K562 (cell line): ENCODE measurements at regions of chr6 and their contacts with region 1.

Region 1: DNA sequence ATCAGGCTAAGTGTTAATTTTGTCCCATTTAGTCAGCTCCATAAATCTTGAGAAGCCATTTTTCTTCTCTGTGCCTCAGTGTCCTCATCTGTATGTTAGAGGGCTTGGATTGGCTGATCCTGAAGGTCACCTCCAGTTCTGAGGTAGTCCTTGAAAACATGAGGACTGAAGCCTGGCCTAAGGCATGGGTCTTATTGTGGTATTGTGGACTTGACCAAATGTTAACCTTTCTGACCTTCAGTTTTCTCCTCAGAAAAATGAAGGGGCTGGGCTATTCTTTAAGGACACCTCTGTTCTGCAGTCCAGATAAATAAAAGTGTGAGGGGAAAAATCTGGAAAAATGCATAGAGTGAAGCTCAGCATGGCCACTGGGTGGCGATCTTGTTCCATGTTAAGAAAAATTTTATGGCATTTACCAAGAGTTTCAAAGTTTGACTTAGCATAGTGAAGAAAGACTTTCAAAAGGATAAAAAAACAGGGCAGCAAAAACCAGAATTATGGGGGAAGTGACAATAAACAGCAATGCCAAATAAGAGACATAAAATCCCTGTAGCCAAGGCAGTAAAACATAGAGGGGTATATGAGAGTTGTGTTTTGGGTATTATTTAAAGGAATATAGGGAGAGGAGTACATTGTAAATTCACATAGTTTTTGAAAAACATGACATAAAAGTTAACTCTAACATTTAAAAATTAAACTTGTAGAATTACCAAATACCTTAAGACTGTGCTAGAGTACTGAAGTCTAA is 13.2 kb upstream of the TFB1M start:
- DNase-seq: peak; percentile 30 to 75 (median 46)
- ATAC-seq: peak; percentile 85
- H3K4me3 ChIP-seq: no peak overlapping the region
- H3K27ac ChIP-seq: no peak overlapping the region
- H3K4me1 ChIP-seq: no peaks in the 10 kb centered on the region; a peak in 1 of 5 replicates
- H3K27me3 ChIP-seq: peaks cover 2 to 5% of the 10 kb centered on the region in 2 experiments; a peak in 3 of 5 replicates
- CTCF ChIP-seq: peak; percentile 54 to 93 (median 79)
- EP300 ChIP-seq: no peak
- POLR2A ChIP-seq: no peak
- RAD21 ChIP-seq: peak; percentile 90 to 91

Region 2: DNA sequence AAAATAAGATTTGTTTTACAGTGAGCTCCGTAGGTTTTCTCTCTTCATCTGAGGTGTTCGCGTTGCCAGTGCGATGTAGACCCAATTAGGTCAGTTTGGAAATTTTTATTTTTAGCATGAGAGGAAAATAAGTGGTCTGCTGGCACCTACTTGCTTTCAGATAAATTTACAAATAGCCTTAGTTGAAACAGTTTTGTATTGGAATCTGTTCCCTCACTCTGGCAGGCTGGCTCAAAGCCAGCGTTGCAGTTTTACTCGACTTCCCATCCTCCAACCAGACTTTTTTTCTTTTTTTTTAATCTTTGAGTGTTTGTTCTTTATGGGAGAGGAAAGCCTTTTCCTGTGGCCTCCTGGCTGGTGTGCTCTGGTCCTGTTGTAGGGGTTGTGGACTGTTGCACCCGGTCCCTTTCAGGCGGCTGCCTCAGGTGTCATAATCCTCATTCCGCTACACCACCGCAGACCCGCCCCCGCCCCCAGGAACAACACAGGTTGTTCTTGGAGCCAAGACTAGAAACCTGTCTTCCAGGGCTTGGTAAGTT is 285.7 kb before region 1 on chr6:
- CTCF ChIA-PET with region 1: no interaction called
- POLR2A ChIA-PET with region 1: no interaction called
- in situ Hi-C with region 1: no loop called
- intact Hi-C with region 1: no loop called
- DNase-seq: no peak
- ATAC-seq: no peak
- H3K4me3 ChIP-seq: no peak overlapping the region
- H3K27ac ChIP-seq: no peak overlapping the region
- H3K4me1 ChIP-seq: no peaks in the 10 kb centered on the region
- H3K27me3 ChIP-seq: peaks cover 42 to 66% of the 10 kb centered on the region in 2 experiments
- CTCF ChIP-seq: no peak
- EP300 ChIP-seq: no peak
- POLR2A ChIP-seq: no peak
- RAD21 ChIP-seq: no peak

Region 3: GRCh38 chr6:155174576-155175211 is 152.8 kb before region 1 on chr6:
- CTCF ChIA-PET with region 1: interaction called, 4 read pairs
- POLR2A ChIA-PET with region 1: no interaction called
- in situ Hi-C with region 1: no loop called
- intact Hi-C with region 1: loop called (anchors 2 kb)
- DNase-seq: peak; percentile 60 to 83 (median 72)
- ATAC-seq: peak; percentile 98
- H3K4me3 ChIP-seq: no peak overlapping the region
- H3K27ac ChIP-seq: no peak overlapping the region
- H3K4me1 ChIP-seq: peaks cover 0 to 2% of the 10 kb centered on the region in 2 experiments; a peak in 1 of 5 replicates
- H3K27me3 ChIP-seq: peaks cover 5 to 15% of the 10 kb centered on the region in 2 experiments; a peak in 3 of 5 replicates
- CTCF ChIP-seq: peak; percentile 71 to 79 (median 79)
- EP300 ChIP-seq: no peak
- POLR2A ChIP-seq: no peak
- RAD21 ChIP-seq: peak; percentile 79 to 94

Region 4: DNA sequence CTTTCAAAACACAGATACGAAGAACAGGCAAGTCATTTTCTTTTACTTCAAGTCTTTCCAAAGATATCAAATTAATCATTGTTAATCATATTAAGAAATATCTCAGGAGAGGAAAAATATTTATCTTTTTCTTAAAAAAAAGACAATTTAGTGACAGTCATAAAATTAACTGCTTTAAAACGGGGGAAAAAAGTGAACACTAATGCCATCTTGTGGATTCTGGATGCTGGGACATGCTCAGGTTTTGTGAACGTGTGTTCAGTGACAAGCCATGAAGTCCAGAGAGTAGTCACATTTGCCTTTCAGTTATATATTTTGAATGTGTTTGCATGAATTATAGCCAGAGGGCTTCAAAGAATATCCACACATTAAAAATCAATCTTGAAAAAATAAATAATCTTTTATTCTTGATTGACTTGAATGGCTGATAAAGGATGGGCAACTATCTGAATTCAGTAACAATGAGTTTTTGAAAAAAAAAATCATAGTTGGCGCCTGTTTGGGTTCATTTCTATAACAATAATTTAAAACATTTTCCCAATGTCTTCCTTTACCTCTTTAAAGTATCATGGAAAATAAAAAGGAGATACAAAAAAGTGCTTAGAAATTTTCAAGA is 202.8 kb after region 1 on chr6:
- CTCF ChIA-PET with region 1: no interaction called
- POLR2A ChIA-PET with region 1: no interaction called
- in situ Hi-C with region 1: no loop called
- intact Hi-C with region 1: loop called (anchors 2 kb)
- DNase-seq: peak in 2 of 4 experiments; percentile 8 to 19
- ATAC-seq: peak; percentile 57; the same call in 2 of the 3 replicates
- H3K4me3 ChIP-seq: no peak overlapping the region
- H3K27ac ChIP-seq: no peak overlapping the region
- H3K4me1 ChIP-seq: no peaks in the 10 kb centered on the region
- H3K27me3 ChIP-seq: no peaks in the 10 kb centered on the region
- CTCF ChIP-seq: peak in 2 of 3 experiments; percentile 27 to 39; a peak in 2 of 6 replicates
- EP300 ChIP-seq: no peak
- POLR2A ChIP-seq: no peak
- RAD21 ChIP-seq: peak; percentile 24 to 50; a peak in 3 of 4 replicates

Region 5: DNA sequence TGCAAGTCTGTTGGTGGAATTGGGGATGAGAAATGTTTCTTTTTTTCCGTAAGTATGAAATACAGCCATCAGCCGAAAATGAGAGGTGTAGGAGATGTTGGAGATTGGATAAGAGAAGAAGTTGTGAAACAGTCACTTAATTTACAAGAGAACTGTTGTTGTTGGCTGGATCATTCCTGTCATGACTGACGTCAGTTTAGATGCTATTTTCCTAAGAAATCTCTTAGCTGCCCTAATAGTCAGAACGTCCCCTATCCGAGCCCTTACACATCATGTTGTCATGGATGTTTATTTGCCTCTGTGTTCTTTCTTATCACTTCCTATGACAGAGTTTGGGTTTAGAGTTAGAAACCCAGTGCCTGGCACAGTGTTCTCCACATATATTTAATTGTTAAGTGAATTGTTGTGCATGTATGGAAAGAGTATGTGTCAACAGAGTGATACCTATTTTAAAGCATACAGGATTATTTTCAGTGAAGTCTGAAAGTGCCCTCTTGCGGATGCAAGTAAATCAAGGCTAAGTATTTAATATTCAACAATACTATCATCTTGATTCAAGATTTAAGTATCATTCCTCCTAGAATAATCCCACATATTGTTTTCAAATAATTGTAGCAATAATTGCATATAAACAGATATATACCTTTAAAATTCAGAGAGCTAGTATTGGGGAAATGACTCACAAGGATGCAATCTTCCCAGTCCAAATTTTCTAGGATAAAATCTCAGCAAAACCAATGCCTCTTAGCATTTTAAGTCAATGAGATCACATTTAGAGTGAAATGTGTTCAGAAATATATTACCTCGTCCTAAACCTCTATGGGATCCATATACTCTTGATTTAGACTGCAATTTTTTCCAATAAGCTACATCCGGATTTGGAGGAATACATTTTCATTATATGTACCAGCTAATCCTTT is 438.0 kb after region 1 on chr6:
- CTCF ChIA-PET with region 1: no interaction called
- POLR2A ChIA-PET with region 1: no interaction called
- in situ Hi-C with region 1: no loop called
- intact Hi-C with region 1: loop called (anchors 5 kb)
- DNase-seq: peak in 1 of 4 experiments; percentile 9
- ATAC-seq: no peak
- H3K4me3 ChIP-seq: no peak overlapping the region
- H3K27ac ChIP-seq: no peak overlapping the region
- H3K4me1 ChIP-seq: no peaks in the 10 kb centered on the region
- H3K27me3 ChIP-seq: no peaks in the 10 kb centered on the region
- CTCF ChIP-seq: peak in 2 of 3 experiments; percentile 1 to 42; a peak in 2 of 6 replicates
- EP300 ChIP-seq: no peak
- POLR2A ChIP-seq: no peak
- RAD21 ChIP-seq: peak; percentile 45 to 61

Region 6: GRCh38 chr6:156359912-156360311 is 1032.4 kb after region 1 on chr6:
- CTCF ChIA-PET with region 1: no interaction called
- POLR2A ChIA-PET with region 1: no interaction called
- in situ Hi-C with region 1: no loop called
- intact Hi-C with region 1: loop called (anchors 5 kb)
- DNase-seq: peak; percentile 40 to 55 (median 53)
- ATAC-seq: peak; percentile 96
- H3K4me3 ChIP-seq: no peak overlapping the region
- H3K27ac ChIP-seq: no peak overlapping the region
- H3K4me1 ChIP-seq: no peaks in the 10 kb centered on the region
- H3K27me3 ChIP-seq: no peaks in the 10 kb centered on the region
- CTCF ChIP-seq: peak; percentile 52 to 64 (median 56)
- EP300 ChIP-seq: no peak
- POLR2A ChIP-seq: no peak
- RAD21 ChIP-seq: peak in 1 of 2 experiments; percentile 55; a peak in 2 of 4 replicates

Region 7: DNA sequence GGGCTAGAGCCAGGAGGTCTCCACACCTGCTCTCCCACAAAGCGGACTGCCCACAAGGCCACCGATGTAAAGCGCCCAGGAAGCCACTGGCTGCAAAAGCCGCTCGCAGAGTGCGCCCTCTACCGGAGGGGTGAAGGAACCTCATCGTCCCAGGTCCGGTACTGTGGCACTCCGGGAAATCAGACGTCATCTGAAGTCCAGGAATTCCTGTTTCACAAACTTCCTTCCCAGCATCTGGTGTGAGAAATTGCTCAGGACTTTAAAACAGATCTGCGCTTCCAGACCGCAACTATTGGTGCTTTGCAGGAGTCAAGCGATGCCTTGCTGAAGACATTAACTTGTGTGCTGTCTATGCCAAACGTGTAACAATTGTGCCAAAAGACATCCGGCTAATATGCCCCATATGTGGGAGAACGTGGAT is 1334.5 kb after region 1 on chr6:
- CTCF ChIA-PET with region 1: no interaction called
- POLR2A ChIA-PET with region 1: no interaction called
- in situ Hi-C with region 1: no loop called
- intact Hi-C with region 1: loop called (anchors 1 kb)
- DNase-seq: peak; percentile 86 to 88 (median 86)
- ATAC-seq: peak; percentile 99
- H3K4me3 ChIP-seq: 0 out of 2 replicates have a peak overlapping the region, but pooled peaks have one; percentile 6
- H3K27ac ChIP-seq: no peak overlapping the region
- H3K4me1 ChIP-seq: no peaks in the 10 kb centered on the region; a peak in 2 of 5 replicates
- H3K27me3 ChIP-seq: peaks cover 5 to 17% of the 10 kb centered on the region in 2 experiments; a peak in 4 of 5 replicates
- CTCF ChIP-seq: peak; percentile 93 to 97 (median 93)
- EP300 ChIP-seq: no peak
- POLR2A ChIP-seq: no peak
- RAD21 ChIP-seq: peak; percentile 69 to 86